ENCODE measurements at regions of chr1 and their contacts with region 1.

Region 1: DNA sequence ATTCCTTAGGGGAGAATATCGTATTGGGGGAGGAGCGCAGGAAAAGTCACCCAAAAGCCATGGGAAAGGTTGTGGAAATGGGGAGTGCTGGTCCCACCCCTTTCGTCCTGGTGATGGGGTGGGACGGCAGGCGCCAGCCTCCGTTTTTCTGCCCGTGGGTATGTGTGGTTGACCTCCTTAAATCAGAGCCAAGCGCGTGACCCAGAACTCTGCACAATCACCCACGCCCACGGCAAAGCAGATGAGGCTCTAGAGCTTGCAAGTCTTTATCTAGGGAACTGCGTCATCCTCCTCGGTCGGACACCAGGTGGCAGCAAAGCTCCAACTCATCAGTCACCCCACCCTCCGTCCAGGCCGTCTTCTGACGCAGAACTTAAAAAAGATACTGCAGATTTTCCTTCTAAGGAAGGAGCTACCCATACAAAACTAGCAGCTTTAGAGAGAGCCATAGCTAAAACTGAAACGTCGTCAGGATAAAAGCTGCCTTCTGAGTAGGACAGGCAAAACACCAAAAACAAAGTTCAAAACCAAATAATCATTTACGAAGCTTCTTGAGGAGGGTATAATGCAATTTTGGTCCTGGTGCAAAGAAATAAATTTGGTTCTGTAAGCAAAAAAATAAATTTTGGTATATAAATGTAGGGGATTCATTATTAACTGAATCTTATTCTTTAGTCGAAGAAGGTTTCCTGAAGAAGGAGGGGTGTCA is 62.0 kb downstream of the TBX19 start:
- H3K4me3 ChIP-seq: no peak overlapping the region
- H3K27ac ChIP-seq: no peak overlapping the region
- H3K4me1 ChIP-seq: no peaks in the 10 kb centered on the region
- CTCF ChIP-seq: peak; percentile 72

Region 2: GRCh38 chr1:168234846-168235547 is 107.7 kb before region 1 on chr1:
- CTCF ChIA-PET with region 1: interaction called, 31 read pairs
- POLR2A ChIA-PET with region 1: interaction called, 4 read pairs
- H3K4me3 ChIP-seq: no peak overlapping the region
- H3K27ac ChIP-seq: no peak overlapping the region
- H3K4me1 ChIP-seq: no peaks in the 10 kb centered on the region
- CTCF ChIP-seq: peak; percentile 42; the same call in 1 of the 2 replicates

Region 3: DNA sequence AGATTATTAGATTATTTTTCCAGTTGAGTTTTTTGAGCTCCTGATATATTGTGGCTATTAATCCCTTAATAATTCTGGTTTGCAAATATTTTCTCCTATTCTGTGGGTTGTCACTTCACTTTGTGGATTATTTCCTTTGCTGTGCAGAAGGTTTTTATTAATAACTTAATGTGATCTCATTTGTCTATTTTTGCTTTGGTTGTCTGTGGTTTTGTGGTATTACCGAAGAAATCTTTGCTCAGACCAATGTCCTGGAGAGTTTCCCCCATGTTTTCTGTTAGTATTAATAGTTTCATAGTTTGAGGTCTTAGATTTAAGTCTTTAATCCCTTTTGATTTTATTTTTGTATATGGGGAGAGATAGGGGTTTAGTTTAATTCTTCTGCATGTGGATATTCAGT is 69.2 kb before region 1 on chr1:
- CTCF ChIA-PET with region 1: no interaction called
- POLR2A ChIA-PET with region 1: no interaction called
- H3K4me3 ChIP-seq: no peak overlapping the region
- H3K27ac ChIP-seq: no peak overlapping the region
- H3K4me1 ChIP-seq: no peaks in the 10 kb centered on the region
- CTCF ChIP-seq: no peak

Region 4: GRCh38 chr1:168319691-168320090 is 23.0 kb before region 1 on chr1:
- CTCF ChIA-PET with region 1: interaction called, 10 read pairs
- POLR2A ChIA-PET with region 1: no interaction called
- H3K4me3 ChIP-seq: no peak overlapping the region
- H3K27ac ChIP-seq: no peak overlapping the region
- H3K4me1 ChIP-seq: no peaks in the 10 kb centered on the region
- CTCF ChIP-seq: no peak

Region 5: GRCh38 chr1:168365719-168366479 is 23.2 kb after region 1 on chr1:
- CTCF ChIA-PET with region 1: interaction called, 58 read pairs
- POLR2A ChIA-PET with region 1: no interaction called
- H3K4me3 ChIP-seq: no peak overlapping the region
- H3K27ac ChIP-seq: no peak overlapping the region
- H3K4me1 ChIP-seq: no peaks in the 10 kb centered on the region
- CTCF ChIP-seq: no peak

Region 6: GRCh38 chr1:168386949-168387586 is 44.3 kb after region 1 on chr1:
- CTCF ChIA-PET with region 1: interaction called, 10 read pairs
- POLR2A ChIA-PET with region 1: interaction called, 4 read pairs
- H3K4me3 ChIP-seq: no peak overlapping the region
- H3K27ac ChIP-seq: no peak overlapping the region
- H3K4me1 ChIP-seq: no peaks in the 10 kb centered on the region
- CTCF ChIP-seq: no peak

Region 7: DNA sequence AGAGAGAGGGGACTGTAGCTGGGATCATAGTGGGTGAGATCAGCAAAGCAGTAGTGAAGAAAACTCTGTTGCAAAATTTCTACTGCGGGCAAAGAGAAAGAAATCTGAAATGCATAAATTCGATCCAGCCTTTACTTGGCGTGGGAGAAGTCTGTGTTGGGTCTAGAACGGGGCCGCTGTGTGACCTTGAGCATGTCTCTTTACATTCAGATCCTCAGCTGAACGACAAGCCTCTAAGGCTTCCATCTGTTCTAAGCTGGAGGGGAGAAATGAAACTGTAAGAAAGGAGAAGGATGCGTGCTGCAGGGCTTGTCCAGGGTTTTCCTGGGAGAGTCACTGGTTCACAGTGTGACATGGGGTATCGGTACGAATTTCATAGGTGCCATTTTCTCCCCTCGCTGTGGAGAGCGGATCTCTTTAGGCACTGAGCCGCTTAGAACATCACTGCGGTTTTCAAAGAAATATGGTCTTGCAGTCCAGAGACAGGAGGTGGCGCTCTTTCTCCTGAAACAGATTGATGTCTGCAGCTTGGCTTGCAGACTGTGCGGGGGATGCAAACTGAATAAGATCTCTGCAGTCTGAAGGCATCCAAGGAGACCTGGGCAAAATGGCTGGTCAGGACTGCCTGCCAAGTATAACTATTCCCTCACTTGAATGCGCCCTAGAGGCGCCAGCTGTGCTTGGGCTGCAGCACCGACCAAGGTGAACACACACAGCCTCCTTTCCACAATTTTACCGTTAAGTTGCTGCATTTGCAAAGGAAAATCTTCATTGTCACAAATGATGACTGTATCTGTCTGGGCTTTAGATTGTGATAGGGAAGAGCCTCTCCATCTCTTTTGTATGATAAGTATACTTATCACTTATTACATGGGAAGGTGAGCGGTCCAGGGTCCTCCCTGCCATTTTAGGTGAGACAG is 97.0 kb after region 1 on chr1:
- CTCF ChIA-PET with region 1: interaction called, 26 read pairs
- POLR2A ChIA-PET with region 1: no interaction called
- H3K4me3 ChIP-seq: peak overlapping the region; percentile 3; the same call in 1 of the 2 replicates
- H3K27ac ChIP-seq: no peak overlapping the region
- H3K4me1 ChIP-seq: no peaks in the 10 kb centered on the region
- CTCF ChIP-seq: peak; percentile 86

Region 8: DNA sequence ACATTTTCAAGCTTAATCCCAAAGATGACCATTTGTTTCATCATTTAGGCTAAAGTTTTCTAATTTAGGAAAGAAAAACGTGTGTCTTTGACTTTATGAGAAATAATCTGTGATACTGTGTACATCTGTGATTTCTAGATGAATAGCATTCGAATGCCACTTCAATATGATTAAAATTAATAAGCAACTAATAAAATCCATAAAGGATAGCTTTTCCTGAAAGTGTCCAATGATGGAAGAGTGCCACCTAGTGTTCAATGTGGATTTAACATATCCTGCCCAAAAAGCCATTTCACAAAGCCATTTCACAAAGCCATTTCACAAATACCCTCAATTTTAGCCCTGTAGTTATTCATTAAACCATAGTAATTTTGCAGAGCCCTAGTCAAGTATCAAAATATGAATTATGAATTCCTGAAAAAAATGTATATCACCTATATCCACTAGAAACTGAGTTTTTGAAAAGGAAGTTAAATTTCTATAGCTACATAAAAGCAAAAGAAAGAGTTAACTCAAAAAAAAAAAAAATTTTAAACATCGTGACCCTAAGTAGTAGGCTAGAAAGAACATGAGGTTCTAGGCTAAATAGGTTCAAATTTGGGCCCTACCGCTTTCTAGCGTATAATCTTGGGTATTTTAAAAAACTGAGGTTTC is 1005.8 kb after region 1 on chr1:
- CTCF ChIA-PET with region 1: interaction called, 16 read pairs
- POLR2A ChIA-PET with region 1: no interaction called
- H3K4me3 ChIP-seq: no peak overlapping the region
- H3K27ac ChIP-seq: no peak overlapping the region
- H3K4me1 ChIP-seq: no peaks in the 10 kb centered on the region
- CTCF ChIP-seq: peak; percentile 51; the same call in 1 of the 2 replicates

Measured in HEK293 (cell line).